ENCODE measurements at regions of chr12 and their contacts with region 1.

Region 1: DNA sequence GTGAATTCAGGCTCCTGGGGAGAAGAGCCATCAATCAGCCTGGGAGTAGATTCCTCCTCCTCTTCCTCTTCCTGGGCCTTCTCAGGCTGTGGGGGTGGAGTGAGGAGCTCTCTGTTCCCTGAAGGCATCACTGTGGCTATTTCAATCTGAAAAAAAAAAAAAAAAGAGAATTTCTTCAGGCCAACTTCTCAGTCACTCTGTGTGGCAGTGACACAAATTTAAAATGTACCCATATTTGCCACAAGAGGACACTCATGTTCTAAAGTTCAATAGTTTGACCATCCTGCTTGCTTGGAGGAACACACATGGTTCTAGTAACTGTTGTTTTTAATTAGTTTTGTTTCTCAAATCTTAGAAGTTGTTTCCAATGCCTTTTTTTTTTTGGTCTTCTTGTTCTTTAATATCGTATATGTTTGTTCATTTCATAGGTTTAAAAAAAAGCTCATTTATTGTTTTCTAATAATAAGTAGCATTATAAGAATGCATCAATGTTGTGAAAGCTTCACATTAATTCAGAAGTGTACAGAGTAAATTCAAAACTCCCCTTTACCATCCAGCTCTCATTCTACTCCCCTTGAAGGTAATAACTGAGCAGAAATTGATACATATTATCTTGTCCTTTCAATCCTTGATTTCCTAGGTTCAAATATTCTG is 23.3 kb upstream of the CCER1 start:
- DNase-seq: no peak
- ATAC-seq: peak; percentile 86

Region 2: GRCh38 chr12:91109148-91109564 is 130.9 kb after region 1 on chr12:
- intact Hi-C with region 1: loop called (anchors 5 kb)
- DNase-seq: peak; percentile 79
- ATAC-seq: peak; percentile 77

Region 3: DNA sequence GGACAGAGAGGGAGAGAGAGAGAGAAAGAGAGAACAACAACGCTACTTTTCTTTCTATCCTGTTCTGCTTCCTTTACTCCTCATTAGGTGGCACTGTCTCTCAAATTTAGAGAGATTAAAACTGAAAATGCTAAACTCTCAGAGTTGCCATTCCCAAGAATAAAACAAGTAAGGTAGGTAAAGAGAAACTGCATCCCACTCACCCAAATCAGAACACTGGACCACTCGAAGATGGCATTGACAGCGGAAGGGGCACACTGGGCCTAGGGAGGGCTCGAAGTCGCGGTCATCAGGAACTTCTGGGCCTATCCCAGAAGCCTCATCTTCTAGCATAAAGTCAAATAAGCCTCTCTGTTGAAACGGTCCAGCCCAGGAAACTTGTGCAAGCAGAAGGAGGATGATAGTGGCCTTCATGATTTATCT is 199.9 kb after region 1 on chr12:
- intact Hi-C with region 1: loop called (anchors 10 kb)
- DNase-seq: no peak
- ATAC-seq: peak; percentile 29

Region 4: DNA sequence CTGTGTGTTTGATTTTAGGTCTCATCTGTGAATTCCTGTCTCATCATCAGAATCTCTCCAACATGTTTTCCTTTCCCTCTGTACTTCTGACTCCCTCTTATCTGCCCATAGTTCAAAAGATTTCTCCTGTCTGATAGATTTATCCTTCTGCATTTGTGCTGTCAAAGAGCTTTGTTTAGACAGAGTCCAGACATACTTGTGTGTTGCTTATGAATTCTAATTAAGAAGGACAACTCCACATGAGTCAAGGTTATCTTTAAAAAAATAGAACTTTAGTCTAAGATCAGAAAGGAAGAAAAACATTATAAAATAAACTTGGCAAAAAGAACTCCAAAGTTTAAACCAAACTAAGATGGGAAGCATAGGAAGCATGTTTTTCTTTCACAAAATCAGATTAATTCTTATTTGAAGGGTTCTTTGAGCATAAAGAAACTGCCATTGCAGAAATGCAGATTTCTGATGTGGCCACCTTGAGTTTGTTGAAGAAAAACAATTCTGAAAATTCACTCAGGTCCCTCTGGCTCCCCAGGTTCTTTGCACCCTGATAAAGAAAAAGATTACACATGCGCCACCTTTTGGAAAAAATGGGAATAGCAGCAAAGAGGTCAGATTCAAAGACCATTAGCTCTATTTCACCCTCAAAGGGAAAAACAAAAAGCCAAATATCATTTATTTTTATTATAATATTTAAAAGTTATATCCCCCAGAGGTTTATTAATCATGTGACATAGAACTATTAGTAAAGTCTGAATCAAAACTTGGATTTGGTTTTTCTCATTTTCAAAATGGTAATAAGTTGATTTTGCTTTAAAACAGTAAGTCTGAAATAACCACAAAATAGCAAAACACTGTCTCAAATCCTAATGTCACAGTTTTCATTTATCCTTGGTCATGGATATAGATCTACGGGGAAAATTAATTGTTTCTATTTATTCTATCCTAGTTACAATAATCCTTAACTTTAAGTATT is 348.1 kb after region 1 on chr12:
- intact Hi-C with region 1: loop called (anchors 2 kb)
- DNase-seq: no peak
- ATAC-seq: peak; percentile 59

Region 5: DNA sequence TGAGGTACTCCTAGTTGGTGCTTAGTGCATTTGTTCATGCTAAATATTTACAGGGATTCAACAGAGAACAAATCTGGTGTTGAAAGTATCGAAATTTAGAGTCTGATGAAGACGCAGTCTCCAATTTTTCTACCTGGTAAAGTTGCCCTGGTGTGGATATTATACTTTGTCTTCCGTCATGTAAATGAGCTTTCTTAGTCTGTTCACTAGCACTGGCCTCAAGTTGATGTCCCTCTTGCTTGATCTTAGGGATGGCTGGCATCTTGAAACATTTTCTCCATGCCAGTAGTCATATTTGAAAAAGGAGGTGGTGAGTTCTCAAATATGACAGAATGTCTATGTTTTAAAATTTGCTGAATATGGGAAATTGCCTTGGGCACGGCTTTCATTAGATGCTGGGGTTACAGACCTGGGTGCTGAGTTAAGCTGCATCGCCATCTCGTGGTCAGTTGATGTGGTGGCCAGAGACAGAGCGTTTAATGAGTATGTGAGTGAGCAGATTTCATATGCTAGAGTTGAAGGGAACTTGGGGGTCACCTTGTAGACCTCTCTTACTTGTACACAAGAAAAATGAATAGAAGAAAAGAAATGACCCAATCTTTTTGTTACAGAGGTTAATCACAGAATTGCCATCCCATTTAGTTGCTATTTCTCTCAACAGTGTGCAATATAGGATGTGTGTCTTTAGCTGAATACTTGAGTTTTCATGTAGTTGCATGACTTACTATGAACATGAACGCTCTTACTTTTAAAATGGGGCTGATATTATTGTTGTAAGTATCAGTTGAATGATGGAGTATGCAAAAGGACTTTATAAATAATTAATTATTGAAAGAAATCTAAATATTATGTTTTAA is 377.1 kb after region 1 on chr12:
- intact Hi-C with region 1: loop called (anchors 1 kb)
- DNase-seq: peak; percentile 66
- ATAC-seq: peak; percentile 93

Measured in Right ventricle myocardium inferior (tissue), 1 donor.